SK-N-SH (cell line): ENCODE measurements at regions of chr17 and their contacts with region 1.

Region 1: GRCh38 chr17:75319904-75320691 is 30.9 kb upstream of the SLC25A19 start:
- DNase-seq: no peak
- H3K4me3 ChIP-seq: no peak overlapping the region
- H3K27ac ChIP-seq: no peak overlapping the region
- H3K4me1 ChIP-seq: no peaks in the 10 kb centered on the region
- H3K27me3 ChIP-seq: no peaks in the 10 kb centered on the region
- CTCF ChIP-seq: no peak
- EP300 ChIP-seq: no peak; a peak in 1 of 4 replicates
- RAD21 ChIP-seq: no peak

Region 2: GRCh38 chr17:75105618-75106384 is 214.3 kb before region 1 on chr17:
- CTCF ChIA-PET with region 1: no interaction called
- POLR2A ChIA-PET with region 1: no interaction called
- DNase-seq: peak; percentile 91
- H3K4me3 ChIP-seq: no peak overlapping the region
- H3K27ac ChIP-seq: no peak overlapping the region
- H3K4me1 ChIP-seq: peaks cover 0 to 16% of the 10 kb centered on the region in 2 experiments; a peak in 1 of 4 replicates
- H3K27me3 ChIP-seq: no peaks in the 10 kb centered on the region
- CTCF ChIP-seq: peak; percentile 79
- EP300 ChIP-seq: no peak
- RAD21 ChIP-seq: peak; percentile 62

Region 3: DNA sequence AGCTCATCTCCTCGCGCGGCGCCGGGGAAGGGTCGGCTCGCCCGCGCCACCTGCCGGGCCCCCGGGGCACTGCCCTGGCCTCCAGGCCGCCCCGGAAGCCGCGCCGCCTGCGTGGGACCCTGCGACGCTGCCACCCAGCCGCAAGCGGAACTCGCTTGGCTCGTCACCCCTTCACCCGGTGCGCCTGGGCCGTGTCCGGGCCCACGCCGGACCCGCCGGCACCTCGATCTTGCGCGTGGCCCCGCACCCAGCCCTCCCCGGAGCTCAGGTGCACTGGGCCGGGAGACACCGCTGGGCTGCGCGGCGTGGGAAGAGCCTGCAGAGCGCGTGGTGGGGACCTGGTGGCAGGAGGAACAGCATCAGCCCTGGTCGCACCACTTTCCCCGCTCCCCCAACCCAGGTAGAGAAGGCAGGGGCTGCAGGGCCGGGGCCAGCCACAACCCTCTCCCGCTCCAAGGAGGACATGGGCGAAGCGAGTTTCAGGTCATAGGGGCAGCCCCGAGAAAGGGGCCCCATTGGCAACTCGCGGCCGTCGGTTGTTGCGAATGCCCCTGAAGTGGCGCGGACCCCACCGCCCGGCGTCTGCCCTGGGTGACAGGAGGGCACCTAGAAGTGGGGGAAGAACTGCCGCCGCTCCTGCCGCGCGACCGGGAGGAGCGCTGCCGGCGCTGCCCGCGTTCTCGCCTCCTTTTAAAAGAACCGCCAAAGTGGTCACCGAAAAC is 48.7 kb before region 1 on chr17:
- CTCF ChIA-PET with region 1: interaction called, 58 read pairs
- POLR2A ChIA-PET with region 1: interaction called, 3 read pairs
- DNase-seq: peak; percentile 100
- H3K4me3 ChIP-seq: peak overlapping the region; percentile 74 to 79
- H3K27ac ChIP-seq: peak overlapping the region; percentile 51 to 97; a peak in 3 of 4 replicates
- H3K4me1 ChIP-seq: peaks cover 24 to 44% of the 10 kb centered on the region in 2 experiments; a peak in 3 of 4 replicates
- H3K27me3 ChIP-seq: no peaks in the 10 kb centered on the region
- CTCF ChIP-seq: peak; percentile 62
- EP300 ChIP-seq: no peak
- RAD21 ChIP-seq: peak; percentile 17; the same call in 1 of the 2 replicates

Region 4: GRCh38 chr17:75338335-75338734 is 18.2 kb after region 1 on chr17:
- CTCF ChIA-PET with region 1: interaction called, 56 read pairs
- POLR2A ChIA-PET with region 1: no interaction called
- DNase-seq: no peak
- H3K4me3 ChIP-seq: no peak overlapping the region
- H3K27ac ChIP-seq: peak overlapping the region in 1 of 2 experiments; percentile 19; a peak in 1 of 4 replicates
- H3K4me1 ChIP-seq: peaks cover 6 to 9% of the 10 kb centered on the region in 2 experiments; a peak in 3 of 4 replicates
- H3K27me3 ChIP-seq: no peaks in the 10 kb centered on the region
- CTCF ChIP-seq: no peak
- EP300 ChIP-seq: no peak
- RAD21 ChIP-seq: no peak

Region 5: GRCh38 chr17:75372019-75372418 is 51.9 kb after region 1 on chr17:
- CTCF ChIA-PET with region 1: interaction called, 24 read pairs
- POLR2A ChIA-PET with region 1: interaction called, 4 read pairs
- DNase-seq: no peak
- H3K4me3 ChIP-seq: no peak overlapping the region
- H3K27ac ChIP-seq: no peak overlapping the region
- H3K4me1 ChIP-seq: peaks cover 3 to 6% of the 10 kb centered on the region in 2 experiments; a peak in 2 of 4 replicates
- H3K27me3 ChIP-seq: no peaks in the 10 kb centered on the region
- CTCF ChIP-seq: no peak
- EP300 ChIP-seq: no peak
- RAD21 ChIP-seq: no peak

Region 6: DNA sequence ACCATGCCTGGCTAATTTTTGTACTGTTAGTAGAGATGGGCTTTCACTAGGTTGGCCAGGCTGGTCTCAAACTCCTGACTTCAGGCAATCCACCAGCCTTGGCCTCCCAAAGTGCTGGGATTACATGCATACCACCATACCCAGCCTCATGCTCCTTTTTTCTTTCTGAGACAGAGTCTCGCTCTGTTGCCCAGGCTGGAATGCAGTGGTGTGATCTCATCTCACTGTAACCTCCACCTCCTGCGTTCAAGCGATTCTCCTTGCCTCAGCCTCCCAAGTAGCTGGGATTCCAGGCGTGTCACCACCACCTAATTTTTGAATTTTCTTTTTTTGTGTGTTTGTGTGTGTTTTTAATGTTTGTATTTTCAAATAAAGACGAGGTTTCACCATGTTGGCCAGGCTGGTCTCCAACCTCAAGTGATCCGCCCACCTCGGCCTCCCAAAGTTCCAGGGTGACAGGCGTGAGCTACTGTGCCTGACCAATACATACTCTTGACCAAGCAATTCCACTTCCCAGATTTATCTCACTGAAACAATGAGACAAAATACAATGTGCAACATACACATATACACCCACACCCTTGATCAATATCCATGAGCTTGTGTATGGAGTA is 80.3 kb after region 1 on chr17:
- CTCF ChIA-PET with region 1: interaction called, 65 read pairs
- POLR2A ChIA-PET with region 1: no interaction called
- DNase-seq: no peak
- H3K4me3 ChIP-seq: no peak overlapping the region
- H3K27ac ChIP-seq: no peak overlapping the region
- H3K4me1 ChIP-seq: peaks cover 2 to 4% of the 10 kb centered on the region in 2 experiments; a peak in 3 of 4 replicates
- H3K27me3 ChIP-seq: no peaks in the 10 kb centered on the region
- CTCF ChIP-seq: no peak
- EP300 ChIP-seq: no peak
- RAD21 ChIP-seq: no peak

Region 7: GRCh38 chr17:75430159-75430974 is 110.3 kb after region 1 on chr17:
- CTCF ChIA-PET with region 1: interaction called, 10 read pairs
- POLR2A ChIA-PET with region 1: no interaction called
- DNase-seq: no peak
- H3K4me3 ChIP-seq: no peak overlapping the region
- H3K27ac ChIP-seq: no peak overlapping the region
- H3K4me1 ChIP-seq: no peaks in the 10 kb centered on the region; a peak in 1 of 4 replicates
- H3K27me3 ChIP-seq: no peaks in the 10 kb centered on the region
- CTCF ChIP-seq: no peak
- EP300 ChIP-seq: no peak
- RAD21 ChIP-seq: no peak

Region 8: GRCh38 chr17:75490953-75491649 is 171.0 kb after region 1 on chr17:
- CTCF ChIA-PET with region 1: no interaction called
- POLR2A ChIA-PET with region 1: no interaction called
- DNase-seq: no peak
- H3K4me3 ChIP-seq: no peak overlapping the region
- H3K27ac ChIP-seq: no peak overlapping the region
- H3K4me1 ChIP-seq: peaks cover 0 to 10% of the 10 kb centered on the region in 2 experiments; a peak in 1 of 4 replicates
- H3K27me3 ChIP-seq: no peaks in the 10 kb centered on the region
- CTCF ChIP-seq: no peak
- EP300 ChIP-seq: no peak
- RAD21 ChIP-seq: no peak